Dorsolateral prefrontal cortex (tissue), 120 donors: ENCODE measurements at regions of chr9 and their contacts with region 1.

Region 1: DNA sequence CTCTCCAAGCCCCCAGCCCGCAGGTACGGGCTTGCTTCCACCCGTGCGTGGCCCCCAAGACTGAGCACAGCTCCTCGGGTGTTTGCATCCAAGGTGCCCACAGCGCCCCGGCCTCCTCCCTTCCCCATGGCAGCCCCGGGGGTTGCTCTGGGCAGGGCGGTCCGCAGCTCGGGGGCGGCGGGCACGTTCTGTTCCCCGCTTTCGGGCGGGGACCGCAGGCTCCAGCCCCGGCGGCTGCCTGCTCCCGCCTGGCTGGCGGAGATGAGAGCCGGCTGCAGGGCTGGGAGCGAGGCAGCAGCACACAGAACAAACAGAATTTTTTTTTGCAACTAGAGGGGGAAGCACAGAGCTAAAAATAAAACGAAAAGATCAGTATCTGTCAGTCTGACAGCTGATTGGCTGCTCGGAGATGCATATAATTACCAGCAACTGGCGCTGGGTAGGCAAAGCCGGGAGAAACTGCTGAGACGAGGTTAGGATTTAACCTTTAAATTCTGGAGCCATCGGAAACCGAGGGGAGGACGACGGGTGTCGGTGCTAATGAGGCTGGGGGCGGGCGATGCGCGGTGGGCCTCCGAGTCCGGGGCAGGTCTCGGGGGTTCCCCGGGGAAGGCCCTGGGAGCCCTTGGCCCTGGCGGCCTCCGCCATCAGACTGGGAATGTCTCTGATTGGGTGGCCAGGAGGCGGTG is 142.7 kb upstream of the IER5L start:
- DNase-seq: peak in 9 of 10 donors; percentile 63 to 83 (median 73)
- H3K4me3 ChIP-seq: peak overlapping the region; percentile 27 to 72 (median 55)
- H3K27ac ChIP-seq: peak overlapping the region; percentile 42 to 99 (median 95)
- H3K27me3 ChIP-seq: no peaks in the 10 kb centered on the region
- CTCF ChIP-seq: peak in 44 of 56 donors; percentile 10 to 60 (median 40)

Region 2: DNA sequence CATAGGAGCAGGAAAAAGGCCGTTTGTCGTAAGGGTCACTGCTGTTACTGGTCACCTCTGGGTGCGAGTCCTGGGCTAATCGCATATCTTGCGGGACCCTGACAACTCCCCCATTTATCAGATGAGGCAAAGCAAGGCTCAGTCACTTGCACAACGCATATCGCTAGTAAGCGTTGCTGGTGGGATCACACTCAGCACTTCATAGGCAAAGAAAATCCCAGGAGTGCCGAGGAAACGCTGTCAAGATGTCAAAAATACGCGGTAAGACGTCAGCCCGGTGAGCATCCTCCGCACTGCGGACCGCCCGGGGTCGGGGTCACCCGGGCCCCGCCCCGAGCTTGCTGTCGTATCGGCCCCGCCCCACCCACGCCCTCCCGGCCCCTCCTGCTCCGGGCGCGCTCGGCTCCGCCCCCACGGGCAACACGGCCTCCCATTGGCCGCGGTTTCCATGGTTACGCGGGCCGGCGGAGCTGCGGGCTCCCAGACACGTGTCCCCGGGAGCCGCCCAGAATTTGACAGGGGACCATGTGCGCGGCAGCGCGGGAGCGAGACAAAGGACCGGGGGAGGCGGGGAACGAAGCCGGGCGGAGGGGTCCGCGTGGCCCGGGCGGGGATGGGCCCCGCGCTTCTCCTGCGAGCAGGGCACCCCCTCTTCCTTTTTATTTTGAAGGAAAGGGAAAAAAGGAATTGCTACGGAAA is 62.4 kb before region 1 on chr9:
- intact Hi-C with region 1: loop called in 1 of 2 experiments (anchors 5 kb)
- DNase-seq: peak; percentile 85 to 97 (median 94)
- H3K4me3 ChIP-seq: peak overlapping the region; percentile 18 to 66 (median 52)
- H3K27ac ChIP-seq: peak overlapping the region in 50 of 59 donors; percentile 2 to 86 (median 64)
- H3K27me3 ChIP-seq: no peaks in the 10 kb centered on the region
- CTCF ChIP-seq: no peak

Region 3: GRCh38 chr9:129406278-129407225 is 85.8 kb after region 1 on chr9:
- intact Hi-C with region 1: loop called in 1 of 2 experiments (anchors 5 kb)
- DNase-seq: no peak
- H3K4me3 ChIP-seq: no peak overlapping the region
- H3K27ac ChIP-seq: peak overlapping the region in 13 of 59 donors; percentile 8 to 94 (median 67)
- H3K27me3 ChIP-seq: no peaks in the 10 kb centered on the region
- CTCF ChIP-seq: no peak

Region 4: DNA sequence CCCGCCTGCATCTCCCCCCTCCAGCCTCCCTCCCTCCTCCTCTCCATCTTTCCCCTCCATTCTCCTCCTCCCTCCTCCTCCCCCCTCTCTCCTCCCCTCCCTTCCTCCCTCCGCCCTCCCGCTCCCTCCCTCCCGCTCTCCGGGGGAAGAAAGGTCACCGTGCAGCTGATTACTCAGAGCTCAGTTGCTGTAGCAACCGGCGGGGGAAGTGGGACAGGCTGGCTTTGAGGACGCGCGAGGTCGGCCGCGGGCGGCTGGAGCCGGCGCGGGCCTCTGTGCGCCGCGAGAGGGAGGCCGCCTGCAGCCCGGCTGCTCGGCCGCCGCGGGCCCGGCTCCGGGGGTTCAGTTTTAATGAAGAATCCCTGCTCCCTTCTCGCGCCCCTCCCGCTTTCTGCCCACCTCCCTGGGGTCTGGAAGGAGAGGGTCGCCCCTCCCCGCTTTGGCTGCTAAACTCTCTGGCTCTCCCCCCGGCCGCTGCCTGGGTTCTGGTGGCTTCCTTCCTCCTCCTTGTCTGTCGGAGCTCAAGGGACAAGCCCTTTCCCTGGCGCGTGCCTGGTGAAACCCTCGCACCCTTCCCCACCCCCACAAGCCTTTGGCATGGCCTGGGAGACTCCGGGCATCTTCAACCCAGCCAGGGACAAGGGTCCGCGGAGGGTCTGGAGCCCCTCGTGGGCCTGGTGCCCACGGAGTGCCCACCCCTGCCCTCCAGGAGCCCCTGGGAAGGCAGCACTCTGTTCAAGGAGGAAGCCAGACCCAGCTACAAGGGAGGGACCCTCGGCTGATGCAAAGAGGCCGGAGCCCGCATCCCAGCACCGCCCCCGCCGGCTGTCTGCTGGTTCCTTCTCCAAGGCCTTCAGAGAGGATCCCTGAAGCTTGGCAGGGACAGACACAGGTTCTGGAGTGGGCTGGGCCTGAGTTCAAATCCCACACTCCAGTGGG is 139.9 kb after region 1 on chr9:
- intact Hi-C with region 1: loop called in 1 of 2 experiments (anchors 5 kb)
- DNase-seq: peak; percentile 90 to 98 (median 96)
- H3K4me3 ChIP-seq: peak overlapping the region; percentile 30 to 71 (median 55)
- H3K27ac ChIP-seq: peak overlapping the region; percentile 74 to 100 (median 99)
- H3K27me3 ChIP-seq: no peaks in the 10 kb centered on the region
- CTCF ChIP-seq: peak in 23 of 56 donors; percentile 8 to 58 (median 31)